Right cardiac atrium (tissue), 5 donors: ENCODE measurements at regions of chr4 and their contacts with region 1.

Region 1: DNA sequence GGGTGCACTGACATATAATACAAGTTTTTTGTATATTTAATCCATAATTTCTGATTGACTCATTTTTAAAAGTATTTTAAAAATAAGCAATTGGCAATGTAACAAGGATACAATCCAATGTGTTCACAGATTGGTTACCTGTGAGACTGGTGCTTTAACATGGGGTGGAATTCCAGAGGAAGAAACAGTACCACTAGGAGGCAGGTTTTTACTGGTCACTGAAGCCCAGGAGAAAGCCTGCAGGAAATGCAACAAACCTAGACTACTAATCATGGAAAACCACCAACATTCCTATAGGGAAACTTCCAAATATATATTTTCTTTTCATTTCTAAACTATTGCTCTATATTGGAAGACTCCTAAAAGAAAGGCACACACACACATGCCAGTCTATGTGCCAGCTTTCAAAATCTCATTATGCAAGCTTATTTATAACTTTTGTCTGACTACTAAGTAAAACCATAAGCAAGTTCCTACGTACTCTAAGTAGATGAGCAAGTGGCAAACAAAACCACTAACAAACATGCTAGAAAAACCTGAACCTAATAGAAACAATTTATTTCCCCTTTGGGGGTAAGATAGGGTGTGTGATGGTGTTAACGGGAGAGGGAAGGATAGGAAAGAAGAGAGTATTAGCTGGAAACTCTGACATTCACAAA is 19.2 kb downstream of the G3BP2 start:
- DNase-seq: no peak
- ATAC-seq: peak in 1 of 2 donors; percentile 47
- H3K4me3 ChIP-seq: no peak overlapping the region
- H3K27ac ChIP-seq: no peak overlapping the region
- H3K4me1 ChIP-seq: no peaks in the 10 kb centered on the region
- H3K27me3 ChIP-seq: no peaks in the 10 kb centered on the region

Region 2: DNA sequence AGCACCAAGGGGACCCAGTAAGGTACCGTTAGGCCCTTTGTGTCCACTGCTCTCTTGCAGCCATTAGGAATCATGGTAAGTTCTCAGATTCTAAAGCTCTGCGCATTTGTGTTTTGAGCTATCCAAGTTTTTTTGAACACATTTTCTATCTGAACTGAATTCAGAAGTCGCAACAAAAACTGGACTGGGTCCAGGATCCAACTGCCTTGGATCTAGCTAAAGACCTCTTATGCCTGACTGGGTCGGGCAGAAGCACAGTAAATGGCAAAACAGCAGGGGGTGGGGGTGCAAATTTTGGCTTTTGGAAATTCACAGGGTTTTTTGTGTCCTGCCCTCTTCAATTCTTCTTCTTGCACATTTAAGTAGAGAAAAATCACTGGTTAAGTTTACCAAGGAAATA is 169.8 kb before region 1 on chr4:
- intact Hi-C with region 1: no loop called
- DNase-seq: peak in 2 of 3 donors; percentile 22 to 71
- ATAC-seq: peak in 1 of 2 donors; percentile 38
- H3K4me3 ChIP-seq: no peak overlapping the region
- H3K27ac ChIP-seq: no peak overlapping the region
- H3K4me1 ChIP-seq: no peaks in the 10 kb centered on the region
- H3K27me3 ChIP-seq: no peaks in the 10 kb centered on the region

Region 3: GRCh38 chr4:75779105-75779757 is 125.3 kb after region 1 on chr4:
- intact Hi-C with region 1: loop called in 1 of 4 experiments (anchors 10 kb)
- DNase-seq: no peak
- ATAC-seq: no peak
- H3K4me3 ChIP-seq: no peak overlapping the region
- H3K27ac ChIP-seq: no peak overlapping the region
- H3K4me1 ChIP-seq: no peaks in the 10 kb centered on the region
- H3K27me3 ChIP-seq: no peaks in the 10 kb centered on the region